ENCODE measurements at regions of chr21 and their contacts with region 1.

Region 1: GRCh38 chr21:46323227-46324128 is at the start of gene C21orf58:
- DNase-seq: peak; percentile 94 to 99 (median 98)
- ATAC-seq: peak; percentile 83
- H3K4me3 ChIP-seq: peak within 1 kb of the TSS; percentile 99
- H3K4me3 Mint-ChIP-seq: peak within 1 kb of the TSS; percentile 96
- H3K27ac ChIP-seq: peak within 1 kb of the TSS; percentile 97 to 100
- H3K27ac Mint-ChIP-seq: peak within 1 kb of the TSS; percentile 98
- H3K4me1 ChIP-seq: peaks cover 12% of the 10 kb centered on the region
- H3K4me1 Mint-ChIP-seq: peaks cover 38% of the 10 kb centered on the region
- H3K27me3 ChIP-seq: no peaks in the 10 kb centered on the region
- H3K27me3 Mint-ChIP-seq: no peaks in the 10 kb centered on the region
- CTCF ChIP-seq: no peak
- total RNA-seq, gene C21orf58: 1.2 to 1.5 TPM

Region 2: DNA sequence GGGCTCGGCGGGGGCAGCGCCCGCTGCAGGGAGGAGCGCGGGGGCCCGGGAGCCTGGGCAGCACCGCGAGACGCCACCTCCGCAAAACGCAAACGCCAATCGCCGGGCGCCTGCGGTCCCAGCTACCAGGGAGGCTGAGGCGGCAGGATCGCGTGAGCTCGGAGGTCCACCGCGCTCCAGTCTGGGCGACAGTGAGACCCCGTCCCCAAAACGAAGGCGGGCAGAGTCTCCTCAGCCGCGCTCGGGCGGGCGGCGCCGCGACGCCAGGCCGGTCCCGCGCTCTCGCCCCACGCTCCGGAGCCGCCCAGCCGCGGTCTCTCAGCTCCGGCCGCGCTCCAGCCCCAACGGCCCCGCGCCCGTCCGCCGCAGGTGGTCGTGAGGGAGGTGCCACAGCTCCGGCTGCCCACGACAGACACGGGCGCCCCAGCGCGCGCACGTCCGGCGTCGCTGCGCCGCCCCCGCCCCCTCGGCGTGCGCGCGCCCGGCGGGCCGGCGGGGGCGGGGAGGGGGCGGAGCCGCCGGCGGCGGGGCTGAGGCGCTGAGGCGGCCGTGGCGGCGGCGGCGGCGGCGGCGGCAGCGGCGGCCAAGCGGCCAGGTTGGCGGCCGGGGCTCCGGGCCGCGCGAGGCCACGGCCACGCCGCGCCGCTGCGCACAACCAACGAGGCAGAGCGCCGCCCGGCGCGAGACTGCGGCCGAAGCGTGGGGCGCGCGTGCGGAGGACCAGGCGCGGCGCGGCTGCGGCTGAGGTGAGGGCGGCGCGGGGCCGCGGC is 1249.2 kb before region 1 on chr21 and contains the start of gene ADARB1:
- CTCF ChIA-PET with region 1: no interaction called
- POLR2A ChIA-PET with region 1: no interaction called
- intact Hi-C with region 1: loop called in 1 of 2 experiments (anchors 10 kb)
- DNase-seq: peak; percentile 24 to 87 (median 63)
- ATAC-seq: peak; percentile 55
- H3K4me3 ChIP-seq: peak within 1 kb of the TSS; percentile 58 to 69
- H3K4me3 Mint-ChIP-seq: peak within 1 kb of the TSS; percentile 95
- H3K27ac ChIP-seq: peak within 1 kb of the TSS; percentile 36 to 68
- H3K27ac Mint-ChIP-seq: peak within 1 kb of the TSS; percentile 92
- H3K4me1 ChIP-seq: peaks cover 38% of the 10 kb centered on the region
- H3K4me1 Mint-ChIP-seq: peaks cover 41% of the 10 kb centered on the region
- H3K27me3 ChIP-seq: no peaks in the 10 kb centered on the region
- H3K27me3 Mint-ChIP-seq: no peaks in the 10 kb centered on the region
- CTCF ChIP-seq: no peak
- total RNA-seq, gene ADARB1: 21.1 to 22.6 TPM

Region 3: GRCh38 chr21:46144464-46145070 is 178.9 kb before region 1 on chr21:
- CTCF ChIA-PET with region 1: interaction called, 6 read pairs
- POLR2A ChIA-PET with region 1: no interaction called
- intact Hi-C with region 1: loop called in 1 of 2 experiments (anchors 10 kb)
- DNase-seq: peak in 1 of 9 experiments; percentile 4
- ATAC-seq: no peak
- H3K4me3 ChIP-seq: no peak overlapping the region
- H3K4me3 Mint-ChIP-seq: no peak overlapping the region
- H3K27ac ChIP-seq: no peak overlapping the region
- H3K27ac Mint-ChIP-seq: peak overlapping the region; percentile 75
- H3K4me1 ChIP-seq: peaks cover 5% of the 10 kb centered on the region
- H3K4me1 Mint-ChIP-seq: peaks cover 8% of the 10 kb centered on the region
- H3K27me3 ChIP-seq: no peaks in the 10 kb centered on the region
- H3K27me3 Mint-ChIP-seq: peaks cover 2% of the 10 kb centered on the region
- CTCF ChIP-seq: no peak

Region 4: DNA sequence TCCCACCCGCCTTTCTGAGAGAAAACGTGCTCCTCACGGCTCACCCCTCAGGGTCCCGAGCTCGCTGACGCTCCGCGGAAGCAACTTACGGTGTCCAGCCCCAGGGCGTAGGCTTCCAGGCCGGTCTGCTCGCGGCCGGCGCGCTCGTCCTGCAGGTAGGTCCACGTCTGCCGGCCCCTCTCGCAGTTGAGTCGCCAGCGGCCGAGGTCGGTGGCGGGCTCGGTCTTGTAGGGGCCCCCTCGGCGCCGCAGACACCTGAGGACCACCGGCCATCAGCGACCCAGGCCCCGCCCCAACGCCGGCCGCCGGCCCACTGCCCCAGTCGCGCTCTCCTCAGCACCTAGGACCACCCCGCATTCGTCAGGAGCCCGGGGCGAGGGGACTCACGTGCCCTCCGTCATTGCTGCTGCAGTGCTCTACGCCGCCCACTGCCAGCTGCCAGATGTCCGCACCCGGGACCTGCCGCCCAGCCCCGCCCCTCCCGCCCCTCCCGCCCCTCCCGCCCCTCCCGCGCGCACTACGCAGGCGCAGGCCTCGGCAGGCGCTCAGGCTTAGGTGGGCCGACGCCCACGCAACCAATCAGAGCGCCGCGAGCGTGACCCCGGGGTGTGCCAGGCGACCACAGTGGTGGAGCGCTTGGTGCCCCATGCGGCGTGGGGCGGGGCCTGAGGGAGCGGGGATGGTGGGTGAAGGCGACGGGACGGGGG is 95.0 kb before region 1 on chr21 and contains the start of gene LSS:
- CTCF ChIA-PET with region 1: interaction called, 5 read pairs
- POLR2A ChIA-PET with region 1: no interaction called
- intact Hi-C with region 1: loop called (anchors 1 kb)
- DNase-seq: peak; percentile 96 to 100 (median 98)
- ATAC-seq: peak; percentile 97
- H3K4me3 ChIP-seq: peak within 1 kb of the TSS; percentile 81 to 88
- H3K4me3 Mint-ChIP-seq: peak within 1 kb of the TSS; percentile 93
- H3K27ac ChIP-seq: peak within 1 kb of the TSS; percentile 55 to 58
- H3K27ac Mint-ChIP-seq: peak within 1 kb of the TSS; percentile 91
- H3K4me1 ChIP-seq: peaks cover 25% of the 10 kb centered on the region
- H3K4me1 Mint-ChIP-seq: peaks cover 49% of the 10 kb centered on the region
- H3K27me3 ChIP-seq: no peaks in the 10 kb centered on the region
- H3K27me3 Mint-ChIP-seq: no peaks in the 10 kb centered on the region
- CTCF ChIP-seq: no peak
- total RNA-seq, gene LSS: 22.5 to 22.6 TPM

Region 5: GRCh38 chr21:46420241-46421180 is 97.0 kb after region 1 on chr21:
- CTCF ChIA-PET with region 1: no interaction called
- POLR2A ChIA-PET with region 1: no interaction called
- intact Hi-C with region 1: no loop called
- DNase-seq: no peak
- ATAC-seq: no peak
- H3K4me3 ChIP-seq: no peak overlapping the region
- H3K4me3 Mint-ChIP-seq: no peak overlapping the region
- H3K27ac ChIP-seq: no peak overlapping the region
- H3K27ac Mint-ChIP-seq: no peak overlapping the region
- H3K4me1 ChIP-seq: peaks cover 32% of the 10 kb centered on the region
- H3K4me1 Mint-ChIP-seq: peaks cover 28% of the 10 kb centered on the region
- H3K27me3 ChIP-seq: no peaks in the 10 kb centered on the region
- H3K27me3 Mint-ChIP-seq: no peaks in the 10 kb centered on the region
- CTCF ChIP-seq: no peak

Region 6: GRCh38 chr21:46431884-46432488 is 108.5 kb after region 1 on chr21:
- CTCF ChIA-PET with region 1: no interaction called
- POLR2A ChIA-PET with region 1: no interaction called
- intact Hi-C with region 1: loop called in 1 of 2 experiments (anchors 5 kb)
- DNase-seq: peak in 6 of 9 experiments; percentile 19 to 62 (median 50)
- ATAC-seq: peak; percentile 67
- H3K4me3 ChIP-seq: no peak overlapping the region
- H3K4me3 Mint-ChIP-seq: peak overlapping the region; percentile 59
- H3K27ac ChIP-seq: peak overlapping the region; percentile 19 to 37
- H3K27ac Mint-ChIP-seq: peak overlapping the region; percentile 90
- H3K4me1 ChIP-seq: peaks cover 15% of the 10 kb centered on the region
- H3K4me1 Mint-ChIP-seq: peaks cover 14% of the 10 kb centered on the region
- H3K27me3 ChIP-seq: no peaks in the 10 kb centered on the region
- H3K27me3 Mint-ChIP-seq: no peaks in the 10 kb centered on the region
- CTCF ChIP-seq: no peak

Measured in CD8-positive, alpha-beta T cell (primary cell).